ENCODE measurements at regions of chr11 and their contacts with region 1.

Region 1: DNA sequence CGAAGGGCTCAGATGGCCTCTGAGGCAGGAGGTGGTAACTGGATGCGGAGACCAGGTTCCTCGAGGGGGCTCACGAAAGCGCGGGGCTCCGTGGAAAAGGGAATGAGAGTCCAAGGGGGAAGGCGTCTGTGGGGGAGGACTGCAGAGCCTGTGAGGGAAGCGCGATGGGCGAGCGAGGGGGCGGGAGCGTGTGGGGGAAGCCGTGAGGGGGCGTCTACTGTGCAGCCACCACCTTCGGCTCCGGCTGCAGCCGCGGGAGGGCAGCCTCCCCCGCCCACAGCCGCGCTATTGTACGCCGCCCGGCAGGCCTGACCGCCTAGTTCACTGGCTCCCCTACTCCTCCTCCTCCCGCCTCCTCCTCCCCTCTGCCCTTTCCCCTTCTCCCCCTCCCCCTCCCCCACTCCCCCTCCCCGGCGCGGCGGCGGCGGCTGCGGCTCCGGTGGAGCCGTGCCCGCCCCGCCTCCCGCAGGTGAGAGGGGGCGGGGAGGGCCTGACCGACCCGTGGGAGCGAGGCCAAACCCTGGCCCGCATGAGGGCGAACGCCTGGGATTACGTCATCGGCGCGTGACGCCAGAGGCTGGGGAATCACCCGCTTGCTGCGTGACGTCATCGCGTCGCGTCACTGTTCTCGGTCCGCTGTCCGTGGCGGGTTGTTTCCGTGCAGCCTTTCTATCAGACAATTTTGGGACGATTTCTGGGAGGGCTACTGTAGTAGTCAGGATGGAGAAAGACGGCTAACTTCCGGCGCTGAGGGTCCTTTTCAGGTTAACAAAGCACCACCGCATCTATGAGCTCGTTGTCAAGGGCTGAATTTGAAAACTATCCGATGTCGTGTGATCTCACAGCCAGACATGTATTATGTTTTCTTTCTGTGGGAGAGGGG is at the start of gene PAK1:
- DNase-seq: peak; percentile 78
- H3K4me3 ChIP-seq: peak within 1 kb of the TSS; percentile 65
- CTCF ChIP-seq: peak; percentile 14

Region 2: GRCh38 chr11:77569676-77570070 is 95.6 kb after region 1 on chr11:
- in situ Hi-C with region 1: loop called (anchors 5 kb)
- DNase-seq: no peak
- H3K4me3 ChIP-seq: no peak overlapping the region
- CTCF ChIP-seq: no peak